SK-MEL-5 (cell line): ENCODE measurements at regions of chr20 and their contacts with region 1.

Region 1: GRCh38 chr20:49323622-49324238 is 45.9 kb upstream of the ZNFX1 start:
- DNase-seq: peak; percentile 68

Region 2: DNA sequence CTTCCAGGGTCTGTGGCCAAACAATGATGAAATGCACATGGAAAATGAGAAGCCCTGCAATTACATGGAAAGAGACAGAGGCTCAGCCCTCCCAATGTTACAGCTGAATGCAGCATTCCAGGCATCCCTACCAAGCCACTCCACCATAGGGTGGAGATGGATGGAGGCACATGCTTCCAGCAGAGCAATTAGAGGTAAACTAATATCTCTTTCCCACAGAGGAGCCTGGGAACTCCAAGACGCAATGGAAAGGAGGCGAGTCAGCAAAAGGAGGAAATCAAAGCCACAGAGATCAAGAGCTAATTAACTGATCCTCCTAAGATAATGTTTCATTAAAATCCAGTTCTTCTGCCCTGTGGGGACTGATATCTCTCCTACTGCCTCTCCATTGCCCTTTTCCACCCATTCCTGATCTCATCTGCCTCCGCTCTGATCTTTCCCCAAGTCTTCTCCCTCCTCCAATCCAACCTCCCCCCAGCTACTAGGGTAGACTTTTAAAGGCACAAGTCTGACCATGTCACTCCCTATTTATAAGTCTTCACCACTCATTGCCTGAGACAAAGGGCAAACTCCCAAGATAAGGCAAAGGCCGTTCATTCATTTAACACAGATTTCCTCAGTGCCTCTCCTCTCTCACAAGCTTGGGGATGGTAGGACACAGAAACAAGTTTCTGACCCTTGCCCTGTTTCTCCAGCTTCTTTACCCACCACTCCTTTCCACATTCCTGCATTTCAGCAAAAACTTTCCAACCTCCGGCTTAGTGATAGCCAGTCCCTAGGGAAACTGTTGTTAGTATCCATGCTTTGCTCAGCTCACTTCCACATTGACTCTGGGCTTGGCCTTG is 173.0 kb after region 1 on chr20:
- in situ Hi-C with region 1: loop called (anchors 10 kb)
- DNase-seq: no peak